Left colon (tissue), 2 donors: ENCODE measurements at regions of chr7 and their contacts with region 1.

Region 1: GRCh38 chr7:150988230-150989226 is 2.3 kb upstream of the NOS3 start:
- DNase-seq: peak in 1 of 2 donors; percentile 64
- ATAC-seq: peak; percentile 58

Region 2: DNA sequence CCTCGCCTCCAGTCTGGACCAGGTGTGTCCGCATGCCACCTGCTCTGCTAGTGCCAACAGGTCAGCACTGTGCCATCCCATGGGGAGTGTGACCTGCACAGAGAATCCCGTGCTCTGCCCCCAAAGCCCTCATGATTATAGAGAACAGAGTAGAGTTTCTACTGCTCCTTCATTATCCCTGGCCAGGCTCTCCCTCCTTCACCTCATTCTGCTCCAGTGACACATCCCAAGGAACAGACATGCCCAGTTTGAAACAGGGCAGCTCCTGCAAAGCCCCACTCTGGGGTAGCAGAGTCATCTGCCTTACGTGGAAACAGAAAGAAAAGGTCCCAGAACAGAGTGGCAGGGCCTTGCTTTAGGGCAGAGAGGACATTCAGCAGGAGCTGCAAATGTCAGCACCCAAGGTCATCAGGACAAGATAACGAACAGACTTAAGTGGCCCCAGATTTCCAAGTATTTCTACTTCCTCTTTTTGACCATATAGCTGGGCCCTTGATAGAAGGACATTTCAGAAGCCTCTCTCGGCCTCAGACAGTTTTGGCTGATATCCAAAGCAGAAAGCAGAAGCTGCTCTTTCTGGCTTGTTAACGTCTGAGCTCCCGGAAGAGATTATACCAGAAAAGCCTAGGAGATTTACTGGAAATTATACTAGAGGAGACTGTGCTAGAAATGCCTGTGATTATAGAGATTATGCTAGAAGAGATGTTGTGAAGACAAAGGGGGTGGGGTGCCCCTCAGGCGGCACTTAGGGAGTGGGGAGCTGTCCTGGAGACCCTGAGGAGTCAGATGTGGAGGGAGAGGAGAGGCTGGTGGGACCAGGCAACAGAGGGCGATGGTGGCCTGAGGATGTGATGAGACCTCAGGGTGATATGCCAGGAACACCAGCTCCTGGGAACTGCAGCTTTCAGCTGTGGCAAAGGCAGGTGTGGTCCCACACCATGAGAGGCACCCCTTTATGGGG is 200.9 kb before region 1 on chr7:
- intact Hi-C with region 1: loop called in 1 of 2 experiments (anchors 10 kb)
- DNase-seq: peak; percentile 43 to 45
- ATAC-seq: peak; percentile 1

Region 3: GRCh38 chr7:150799741-150800580 is 188.6 kb before region 1 on chr7 and contains the start of gene TMEM176B:
- intact Hi-C with region 1: no loop called
- DNase-seq: peak; percentile 73 to 79
- ATAC-seq: peak; percentile 68
- total RNA-seq, gene TMEM176B: 173 to 355 TPM

Region 4: DNA sequence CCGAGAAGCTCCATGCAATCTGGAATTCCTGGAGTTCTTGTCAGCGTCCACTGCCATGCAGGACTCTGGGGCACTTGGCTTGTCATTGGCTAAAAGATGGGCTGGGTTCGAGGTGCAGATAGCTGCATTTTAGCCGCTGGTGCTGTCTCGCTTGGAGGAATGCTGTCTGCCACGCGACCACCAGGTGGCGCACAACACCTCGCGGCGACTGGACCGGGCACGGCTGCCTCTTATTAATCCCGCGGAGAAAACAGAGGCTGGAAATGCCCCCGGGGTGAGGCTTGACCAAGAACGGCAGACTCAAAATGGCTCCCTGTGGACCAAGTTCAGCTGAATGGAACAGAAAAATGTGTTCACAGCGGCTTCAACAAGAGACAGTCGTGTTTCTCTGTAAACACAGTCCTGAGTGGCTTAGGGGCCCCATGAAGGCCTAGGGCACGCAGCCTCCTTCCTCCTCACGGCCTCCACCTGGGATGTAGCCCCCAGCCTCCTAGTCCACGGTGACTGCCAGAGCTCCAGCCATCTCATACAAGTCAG is 90.0 kb before region 1 on chr7:
- intact Hi-C with region 1: loop called (anchors 2 to 10 kb)
- DNase-seq: peak; percentile 67 to 88
- ATAC-seq: peak; percentile 18